HCT116 (cell line): ENCODE measurements at regions of chr2 and their contacts with region 1.

Region 1: DNA sequence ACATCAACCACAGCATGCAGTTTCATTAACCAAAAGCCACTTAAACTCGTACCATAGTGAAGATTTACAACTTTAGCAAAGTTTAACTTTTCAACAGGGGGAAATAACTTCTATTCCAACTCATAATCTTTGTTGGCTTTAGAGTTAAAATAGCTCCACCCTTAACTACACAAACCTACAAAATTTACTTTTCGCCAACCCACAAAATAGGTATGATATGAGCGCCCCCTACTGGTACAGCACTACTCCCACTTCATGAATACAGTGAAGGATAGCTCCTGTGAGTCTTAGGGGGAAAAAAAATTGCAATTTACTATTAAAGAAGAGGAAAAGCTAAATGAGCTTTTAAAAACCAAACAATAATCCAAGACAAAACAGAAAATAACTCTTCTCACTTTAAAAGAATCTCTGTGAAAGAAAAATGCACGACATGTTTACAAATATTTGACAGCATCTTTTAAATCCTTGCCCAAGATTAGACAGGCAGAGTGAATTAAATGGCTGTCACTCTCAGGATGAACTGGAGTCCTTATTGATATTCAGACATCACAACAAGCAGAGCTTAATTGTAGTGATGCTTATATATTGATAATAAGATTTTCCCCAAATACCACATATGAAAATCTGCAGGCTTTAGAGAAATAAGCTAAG is 32.2 kb downstream of the TMEFF2 start:
- DNase-seq: peak; percentile 50
- ATAC-seq: peak; percentile 93
- H3K4me3 ChIP-seq: no peak overlapping the region
- H3K27ac ChIP-seq: no peak overlapping the region
- H3K4me1 ChIP-seq: no peaks in the 10 kb centered on the region
- H3K27me3 ChIP-seq: no peaks in the 10 kb centered on the region
- CTCF ChIP-seq: peak; percentile 82 to 97 (median 91)
- POLR2A ChIP-seq: no peak
- RAD21 ChIP-seq: peak; percentile 95

Region 2: GRCh38 chr2:191555092-191555742 is 607.3 kb before region 1 on chr2:
- CTCF ChIA-PET with region 1: interaction called, 26 read pairs
- POLR2A ChIA-PET with region 1: interaction called, 3 read pairs
- RAD21 ChIA-PET with region 1: interaction called in 1 of 2 experiments, 3 read pairs
- intact Hi-C with region 1: loop called (anchors 1 kb)
- DNase-seq: peak; percentile 73
- ATAC-seq: peak; percentile 98
- H3K4me3 ChIP-seq: no peak overlapping the region
- H3K27ac ChIP-seq: no peak overlapping the region
- H3K4me1 ChIP-seq: peaks cover 0 to 5% of the 10 kb centered on the region in 2 experiments; a peak in 2 of 4 replicates
- H3K27me3 ChIP-seq: no peaks in the 10 kb centered on the region
- CTCF ChIP-seq: peak; percentile 56 to 80 (median 66); a peak in 5 of 6 replicates
- POLR2A ChIP-seq: no peak
- RAD21 ChIP-seq: peak; percentile 92

Region 3: GRCh38 chr2:191758518-191759507 is 403.7 kb before region 1 on chr2:
- CTCF ChIA-PET with region 1: interaction called, 28 read pairs
- POLR2A ChIA-PET with region 1: interaction called, 3 read pairs
- RAD21 ChIA-PET with region 1: interaction called, 3 to 4 read pairs
- intact Hi-C with region 1: loop called (anchors 2 kb)
- DNase-seq: peak; percentile 76
- ATAC-seq: peak; percentile 98
- H3K4me3 ChIP-seq: peak overlapping the region; percentile 39 to 55
- H3K27ac ChIP-seq: peak overlapping the region; percentile 36
- H3K4me1 ChIP-seq: peaks cover 3 to 12% of the 10 kb centered on the region in 2 experiments; a peak in 3 of 4 replicates
- H3K27me3 ChIP-seq: no peaks in the 10 kb centered on the region
- CTCF ChIP-seq: peak; percentile 48 to 85 (median 80); a peak in 5 of 6 replicates
- POLR2A ChIP-seq: peak; percentile 9
- RAD21 ChIP-seq: peak; percentile 53; the same call in 1 of the 2 replicates

Region 4: GRCh38 chr2:191818725-191819350 is 343.7 kb before region 1 on chr2:
- CTCF ChIA-PET with region 1: interaction called, 158 read pairs
- POLR2A ChIA-PET with region 1: no interaction called
- RAD21 ChIA-PET with region 1: no interaction called
- intact Hi-C with region 1: no loop called
- DNase-seq: no peak
- ATAC-seq: no peak
- H3K4me3 ChIP-seq: no peak overlapping the region
- H3K27ac ChIP-seq: no peak overlapping the region
- H3K4me1 ChIP-seq: no peaks in the 10 kb centered on the region
- H3K27me3 ChIP-seq: no peaks in the 10 kb centered on the region
- CTCF ChIP-seq: no peak
- POLR2A ChIP-seq: no peak
- RAD21 ChIP-seq: no peak

Region 5: GRCh38 chr2:191839918-191840804 is 322.4 kb before region 1 on chr2:
- CTCF ChIA-PET with region 1: interaction called, 12 read pairs
- POLR2A ChIA-PET with region 1: no interaction called
- RAD21 ChIA-PET with region 1: no interaction called
- intact Hi-C with region 1: no loop called
- DNase-seq: no peak
- ATAC-seq: no peak; the same call in 1 of the 2 replicates
- H3K4me3 ChIP-seq: no peak overlapping the region
- H3K27ac ChIP-seq: no peak overlapping the region
- H3K4me1 ChIP-seq: no peaks in the 10 kb centered on the region
- H3K27me3 ChIP-seq: no peaks in the 10 kb centered on the region
- CTCF ChIP-seq: 0 out of 6 replicates have a peak, but pooled peaks of 1 of the 3 experiments have one; percentile 8
- POLR2A ChIP-seq: no peak
- RAD21 ChIP-seq: no peak

Region 6: GRCh38 chr2:191869178-191869577 is 293.3 kb before region 1 on chr2:
- CTCF ChIA-PET with region 1: interaction called, 130 read pairs
- POLR2A ChIA-PET with region 1: interaction called, 4 read pairs
- RAD21 ChIA-PET with region 1: interaction called, 17 to 28 read pairs
- intact Hi-C with region 1: loop called (anchors 1 kb)
- DNase-seq: peak; percentile 57
- ATAC-seq: peak; percentile 67
- H3K4me3 ChIP-seq: no peak overlapping the region
- H3K27ac ChIP-seq: no peak overlapping the region
- H3K4me1 ChIP-seq: peaks cover 36 to 45% of the 10 kb centered on the region in 2 experiments
- H3K27me3 ChIP-seq: no peaks in the 10 kb centered on the region
- CTCF ChIP-seq: peak; percentile 64 to 75 (median 66)
- POLR2A ChIP-seq: no peak
- RAD21 ChIP-seq: peak; percentile 79

Region 7: GRCh38 chr2:192148620-192149321 is 13.7 kb before region 1 on chr2:
- CTCF ChIA-PET with region 1: interaction called, 14 read pairs
- POLR2A ChIA-PET with region 1: no interaction called
- RAD21 ChIA-PET with region 1: no interaction called
- intact Hi-C with region 1: no loop called
- DNase-seq: no peak
- ATAC-seq: no peak
- H3K4me3 ChIP-seq: no peak overlapping the region
- H3K27ac ChIP-seq: no peak overlapping the region
- H3K4me1 ChIP-seq: no peaks in the 10 kb centered on the region; a peak in 1 of 4 replicates
- H3K27me3 ChIP-seq: no peaks in the 10 kb centered on the region
- CTCF ChIP-seq: no peak
- POLR2A ChIP-seq: no peak
- RAD21 ChIP-seq: no peak